Breast epithelium (tissue), 4 donors: ENCODE measurements at regions of chr1 and their contacts with region 1.

Region 1: GRCh38 chr1:999725-1000356 is at the start of gene HES4:
- DNase-seq: peak; percentile 81 to 83
- H3K4me3 ChIP-seq: peak within 1 kb of the TSS; percentile 48 to 89 (median 71)
- H3K27ac ChIP-seq: peak within 1 kb of the TSS; percentile 96 to 98
- H3K4me1 ChIP-seq: peaks cover 6 to 15% of the 10 kb centered on the region in 2 donors
- H3K27me3 ChIP-seq: peaks cover 0 to 8% of the 10 kb centered on the region in 2 donors
- CTCF ChIP-seq: no peak
- POLR2A ChIP-seq: no peak
- total RNA-seq, gene HES4: 8.3 to 36.4 (median 34.2) TPM

Region 2: DNA sequence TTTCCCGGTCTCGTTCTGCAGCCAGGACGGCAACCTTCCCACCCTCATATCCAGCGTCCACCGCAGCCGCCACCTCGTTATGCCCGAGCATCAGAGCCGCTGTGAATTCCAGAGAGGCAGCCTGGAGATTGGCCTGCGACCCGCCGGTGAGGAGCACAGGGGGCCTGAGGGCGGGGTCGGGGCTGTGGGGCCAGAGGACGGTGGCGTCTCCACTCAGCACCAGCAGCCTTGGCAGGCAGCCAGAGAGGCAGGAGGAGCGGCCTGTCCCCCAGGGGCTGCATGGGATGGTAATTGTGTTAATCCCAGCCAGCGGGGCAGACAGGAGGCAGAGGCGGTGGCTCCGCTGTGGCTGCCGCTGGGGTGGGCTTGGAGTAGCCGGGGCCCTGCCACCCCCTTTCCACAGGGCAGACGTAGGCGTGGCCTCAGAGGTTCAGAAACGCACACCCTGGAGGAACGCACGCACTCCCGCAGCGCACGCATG is 64.0 kb before region 1 on chr1:
- intact Hi-C with region 1: loop called (anchors 1 kb)
- DNase-seq: no peak
- H3K4me3 ChIP-seq: peak overlapping the region in 1 of 3 donors; percentile 17
- H3K27ac ChIP-seq: no peak overlapping the region
- H3K4me1 ChIP-seq: peaks cover 5 to 13% of the 10 kb centered on the region in 2 donors
- H3K27me3 ChIP-seq: peaks cover 5 to 48% of the 10 kb centered on the region in 2 donors
- CTCF ChIP-seq: no peak
- POLR2A ChIP-seq: no peak

Region 3: GRCh38 chr1:953524-954320 is 46.1 kb before region 1 on chr1:
- intact Hi-C with region 1: loop called (anchors 1 kb)
- DNase-seq: no peak
- H3K4me3 ChIP-seq: no peak overlapping the region
- H3K27ac ChIP-seq: no peak overlapping the region
- H3K4me1 ChIP-seq: peaks cover 0 to 13% of the 10 kb centered on the region in 2 donors
- H3K27me3 ChIP-seq: no peaks in the 10 kb centered on the region
- CTCF ChIP-seq: no peak
- POLR2A ChIP-seq: no peak

Region 4: DNA sequence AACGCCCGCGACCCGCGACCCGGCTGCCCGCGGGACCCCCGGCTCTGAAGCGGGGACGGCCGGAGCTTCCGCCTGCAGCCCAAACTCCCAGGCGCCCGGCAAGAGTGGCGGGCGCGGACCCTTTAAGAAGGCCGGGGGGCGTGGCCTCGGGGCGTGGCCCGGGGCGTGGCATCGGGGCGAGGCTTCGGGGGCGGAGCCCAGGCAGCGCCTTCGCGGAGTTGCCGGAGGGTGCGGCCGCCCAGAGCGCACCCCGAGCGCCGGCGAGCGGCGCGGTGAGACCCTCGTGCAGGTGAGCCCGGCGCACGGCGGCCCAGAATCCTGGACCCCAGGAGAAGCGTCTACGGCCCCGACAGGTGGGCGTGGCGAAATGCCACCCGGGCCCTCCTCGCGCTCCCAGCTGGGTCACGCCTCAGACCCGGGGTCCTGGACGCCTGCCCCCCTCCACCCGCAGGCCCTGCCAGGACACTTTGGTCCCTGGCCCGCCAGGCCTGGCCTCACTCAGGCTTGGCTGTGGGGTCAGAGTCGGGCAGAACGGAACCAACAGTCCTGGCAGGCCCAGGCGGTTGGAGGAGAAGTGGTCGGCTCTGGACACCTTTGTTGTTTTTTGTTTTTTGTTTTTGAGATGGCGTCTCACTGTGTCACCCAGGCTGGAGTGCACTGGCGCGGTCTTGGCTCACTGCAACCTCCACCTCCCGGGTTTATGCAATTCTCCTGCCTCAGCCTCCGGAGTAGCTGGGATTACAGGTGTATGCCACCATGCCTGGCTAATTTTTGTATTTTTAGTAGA is 59.8 kb after region 1 on chr1:
- intact Hi-C with region 1: loop called (anchors 5 kb)
- DNase-seq: peak; percentile 79 to 85
- H3K4me3 ChIP-seq: peak overlapping the region; percentile 40 to 71 (median 64)
- H3K27ac ChIP-seq: no peak overlapping the region
- H3K4me1 ChIP-seq: peaks cover 6 to 7% of the 10 kb centered on the region in 2 donors
- H3K27me3 ChIP-seq: peaks cover 0 to 20% of the 10 kb centered on the region in 2 donors
- CTCF ChIP-seq: no peak
- POLR2A ChIP-seq: no peak

Region 5: DNA sequence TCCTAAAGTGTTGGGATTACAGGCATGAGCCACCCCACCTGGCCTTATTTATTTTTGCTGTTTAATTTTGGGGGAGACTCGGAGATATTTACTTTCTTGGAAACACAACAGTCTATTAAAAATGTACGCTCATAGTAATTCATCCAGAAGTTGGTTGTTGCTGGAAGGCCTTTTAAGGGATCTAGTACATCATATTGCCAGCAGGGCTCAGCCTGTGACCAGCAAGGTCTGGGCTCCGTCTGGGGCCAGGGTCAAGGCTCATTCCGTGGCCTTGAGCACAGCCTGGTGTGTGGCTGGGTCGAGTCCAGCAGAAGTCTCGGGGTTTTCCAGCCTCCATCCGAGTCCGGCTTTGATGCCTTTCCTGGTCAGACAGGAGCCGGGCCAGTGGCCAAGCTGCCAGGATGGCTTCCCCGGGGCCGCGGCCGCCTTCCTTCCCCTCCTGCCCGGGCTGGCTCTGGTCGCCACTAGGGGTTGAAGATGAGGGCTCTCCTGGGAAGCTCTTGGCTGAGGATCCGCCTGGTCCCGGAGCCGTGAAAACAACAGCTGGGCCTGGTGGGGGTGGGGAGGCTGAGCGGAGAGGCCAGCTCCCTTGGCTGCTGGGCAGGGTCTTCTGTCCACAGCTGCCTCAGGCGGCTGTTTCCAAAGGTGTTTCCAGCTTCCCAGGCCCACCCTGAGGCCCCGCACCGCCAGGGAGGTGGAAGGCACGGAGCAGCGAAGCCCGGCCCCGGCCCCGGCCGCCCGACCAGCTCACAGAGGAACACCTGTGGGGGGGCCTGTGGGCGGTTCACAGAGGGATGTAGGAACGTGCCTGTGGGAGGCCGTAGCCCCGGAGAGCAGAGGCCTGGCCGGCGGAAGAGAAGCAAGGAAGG is 430.5 kb after region 1 on chr1:
- intact Hi-C with region 1: loop called (anchors 2 kb)
- DNase-seq: peak; percentile 72 to 76
- H3K4me3 ChIP-seq: peak overlapping the region; percentile 0 to 86 (median 13)
- H3K27ac ChIP-seq: peak overlapping the region; percentile 95 to 99
- H3K4me1 ChIP-seq: peaks cover 39 to 57% of the 10 kb centered on the region in 2 donors
- H3K27me3 ChIP-seq: no peaks in the 10 kb centered on the region
- CTCF ChIP-seq: peak; percentile 16 to 48 (median 41)
- POLR2A ChIP-seq: no peak

Region 6: DNA sequence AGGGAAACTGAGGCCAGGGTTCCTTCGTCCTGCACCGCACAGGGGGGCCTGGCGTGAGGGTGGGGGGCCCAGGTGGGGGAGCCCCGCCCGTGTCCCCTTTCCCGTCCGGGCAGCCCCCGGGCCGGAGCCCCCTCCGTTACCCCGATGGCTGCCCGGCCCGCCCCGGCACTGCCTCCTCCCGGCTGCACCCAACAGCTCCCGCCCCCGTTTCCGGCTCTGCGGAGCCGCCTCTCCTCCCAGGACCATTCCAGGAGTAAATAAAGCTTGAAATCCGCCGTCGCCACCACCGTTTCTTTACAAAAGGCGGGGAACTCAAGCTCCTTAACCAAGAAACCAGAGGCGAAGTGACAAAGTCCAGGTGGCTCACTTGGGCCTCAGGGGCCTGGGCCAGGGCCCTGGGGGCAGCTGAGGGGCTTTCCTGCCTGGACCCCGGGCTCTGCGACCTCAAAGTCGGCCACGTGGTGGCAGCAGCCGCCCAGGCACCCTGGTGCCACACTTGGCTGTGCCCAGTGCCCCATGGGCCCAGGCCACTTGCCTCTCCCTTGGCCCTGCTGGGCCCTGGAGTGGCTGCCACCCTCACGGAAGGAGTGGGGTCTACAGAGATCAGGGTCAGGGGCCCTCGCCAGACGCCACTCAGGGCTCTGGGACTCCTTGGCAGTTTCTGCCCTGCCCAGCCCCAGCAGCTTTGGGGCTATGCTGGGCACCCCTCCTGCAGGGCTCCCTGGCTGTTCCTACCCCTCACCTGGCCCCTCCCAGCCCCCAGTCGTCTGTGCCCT is 1195.2 kb after region 1 on chr1:
- intact Hi-C with region 1: loop called (anchors 5 kb)
- DNase-seq: peak; percentile 88 to 89
- H3K4me3 ChIP-seq: peak overlapping the region; percentile 58 to 75 (median 73)
- H3K27ac ChIP-seq: peak overlapping the region; percentile 93 to 94
- H3K4me1 ChIP-seq: peaks cover 3 to 27% of the 10 kb centered on the region in 2 donors
- H3K27me3 ChIP-seq: no peaks in the 10 kb centered on the region
- CTCF ChIP-seq: peak; percentile 78 to 98 (median 98)
- POLR2A ChIP-seq: no peak